H1 (cell line): ENCODE measurements at regions of chr6 and their contacts with region 1.

Region 1: DNA sequence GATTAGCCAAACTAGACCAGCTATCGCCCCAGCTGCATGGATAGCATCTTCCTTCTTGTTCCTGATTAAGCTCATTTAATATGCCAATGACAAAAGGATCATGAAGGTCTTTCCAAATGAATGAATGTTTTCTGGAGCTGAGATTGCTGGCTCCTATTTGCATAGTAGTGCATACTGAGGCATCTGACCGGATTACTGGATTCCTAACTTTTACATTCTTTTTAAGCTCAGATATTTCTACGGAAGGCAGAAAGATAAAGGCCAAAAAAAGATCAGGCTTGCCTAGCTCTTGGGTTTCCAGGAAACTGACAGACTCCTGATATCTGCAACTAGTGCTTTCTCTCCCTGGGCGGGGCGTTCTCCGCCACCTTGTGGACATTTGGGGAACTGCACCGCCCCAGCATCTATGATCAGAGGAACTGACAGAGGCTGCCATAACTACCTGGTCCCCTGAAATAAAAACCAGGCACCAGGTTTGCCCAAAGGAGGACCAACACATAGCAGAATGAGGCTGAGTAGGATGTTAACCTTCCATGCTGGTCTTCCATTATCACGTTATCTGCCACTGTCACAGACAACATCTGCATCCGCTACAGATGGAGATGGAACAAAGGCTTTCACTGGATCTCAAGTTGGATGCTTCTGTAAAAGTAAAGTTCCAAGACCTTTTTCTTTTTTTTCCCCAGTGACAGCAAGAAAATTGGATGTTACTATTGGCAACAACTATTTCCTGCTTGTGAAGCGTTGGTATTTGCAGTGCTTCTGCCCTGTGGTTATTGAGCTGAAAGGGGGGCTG is 33.2 kb downstream of the NT5E start:
- DNase-seq: peak; percentile 33 to 97
- H3K4me3 ChIP-seq: no peak overlapping the region
- H3K27ac ChIP-seq: no peak overlapping the region
- H3K4me1 ChIP-seq: no peaks in the 10 kb centered on the region
- H3K27me3 ChIP-seq: no peaks in the 10 kb centered on the region
- CTCF ChIP-seq: peak; percentile 86 to 96 (median 92)
- EP300 ChIP-seq: no peak
- POLR2A ChIP-seq: no peak
- RAD21 ChIP-seq: peak; percentile 88 to 93

Region 2: DNA sequence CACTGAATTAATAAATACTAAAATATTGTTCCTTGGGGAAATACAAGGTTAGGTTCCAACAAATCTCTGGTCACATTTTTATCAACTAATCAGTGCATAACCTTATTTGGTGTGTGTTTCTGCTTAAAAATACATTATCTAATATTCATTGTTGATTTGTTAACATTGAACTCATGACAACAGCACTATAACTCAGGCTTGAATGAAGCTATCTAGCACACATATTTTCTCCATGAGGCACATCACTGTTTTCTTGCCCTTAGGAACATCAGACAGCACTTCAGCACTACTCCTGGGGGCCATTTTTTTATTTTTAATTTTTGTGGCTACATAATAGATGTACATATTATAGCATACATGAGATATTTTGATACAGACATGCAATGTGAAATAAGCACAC is 310.4 kb before region 1 on chr6:
- CTCF ChIA-PET with region 1: no interaction called
- POLR2A ChIA-PET with region 1: no interaction called
- DNase-seq: no peak
- H3K4me3 ChIP-seq: no peak overlapping the region
- H3K27ac ChIP-seq: no peak overlapping the region
- H3K4me1 ChIP-seq: peaks cover 0 to 3% (median 0%) of the 10 kb centered on the region in 4 experiments; a peak in 1 of 7 replicates
- H3K27me3 ChIP-seq: no peaks in the 10 kb centered on the region
- CTCF ChIP-seq: no peak
- EP300 ChIP-seq: no peak
- POLR2A ChIP-seq: no peak
- RAD21 ChIP-seq: no peak

Region 3: DNA sequence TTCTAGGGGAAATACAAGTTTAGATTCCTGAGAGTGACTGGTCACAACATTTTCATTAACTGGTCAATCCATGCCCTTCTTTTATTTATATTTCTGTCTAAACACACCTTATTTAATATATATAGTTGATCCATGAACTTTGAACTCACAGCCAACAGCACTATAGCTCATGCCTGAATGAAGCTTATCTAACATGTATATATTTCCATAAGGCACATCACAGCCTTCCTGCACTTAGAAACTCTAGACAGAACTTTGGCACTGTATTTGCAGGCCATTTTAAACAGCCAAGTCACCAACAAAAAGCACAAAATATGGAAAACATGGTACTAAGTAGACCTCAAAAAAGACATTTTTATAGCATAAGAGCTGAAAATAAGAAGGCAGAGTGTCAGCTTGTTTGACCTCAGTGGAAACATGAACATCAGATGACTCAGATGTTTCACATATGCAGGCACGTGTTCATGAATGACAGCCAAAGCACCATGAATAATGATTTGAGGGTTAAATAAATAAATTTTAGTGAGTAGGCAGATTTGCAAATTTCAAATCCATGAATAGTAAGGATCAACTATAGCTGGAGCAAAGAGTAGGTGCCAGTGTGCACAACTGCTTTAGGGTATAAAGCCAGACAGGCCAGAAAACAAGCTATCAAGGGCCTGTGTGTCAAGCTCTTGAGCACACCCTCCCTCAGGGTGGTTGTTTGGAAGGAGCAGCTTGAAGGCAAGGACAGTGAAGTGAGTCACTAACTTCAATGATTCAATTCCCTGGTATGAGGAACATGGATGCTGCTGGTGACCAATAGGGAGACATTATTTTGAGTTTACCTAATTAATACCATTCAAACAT is 122.1 kb before region 1 on chr6:
- CTCF ChIA-PET with region 1: interaction called, 153 read pairs
- POLR2A ChIA-PET with region 1: no interaction called
- DNase-seq: no peak
- H3K4me3 ChIP-seq: no peak overlapping the region
- H3K27ac ChIP-seq: no peak overlapping the region
- H3K4me1 ChIP-seq: no peaks in the 10 kb centered on the region
- H3K27me3 ChIP-seq: no peaks in the 10 kb centered on the region
- CTCF ChIP-seq: no peak
- EP300 ChIP-seq: no peak
- POLR2A ChIP-seq: no peak
- RAD21 ChIP-seq: no peak

Region 4: GRCh38 chr6:85385636-85386315 is 97.3 kb before region 1 on chr6:
- CTCF ChIA-PET with region 1: interaction called, 19 read pairs
- POLR2A ChIA-PET with region 1: no interaction called
- DNase-seq: no peak
- H3K4me3 ChIP-seq: no peak overlapping the region
- H3K27ac ChIP-seq: no peak overlapping the region
- H3K4me1 ChIP-seq: no peaks in the 10 kb centered on the region
- H3K27me3 ChIP-seq: no peaks in the 10 kb centered on the region
- CTCF ChIP-seq: no peak
- EP300 ChIP-seq: no peak
- POLR2A ChIP-seq: no peak
- RAD21 ChIP-seq: no peak

Region 5: GRCh38 chr6:85449818-85450759 is 33.0 kb before region 1 on chr6 and contains the start of gene NT5E:
- CTCF ChIA-PET with region 1: interaction called, 33 read pairs
- POLR2A ChIA-PET with region 1: interaction called, 3 read pairs
- DNase-seq: peak in 1 of 2 experiments; percentile 89
- H3K4me3 ChIP-seq: peak within 1 kb of the TSS; percentile 65 to 80 (median 69)
- H3K27ac ChIP-seq: no peak within 1 kb of the TSS
- H3K4me1 ChIP-seq: no peaks in the 10 kb centered on the region; a peak in 1 of 7 replicates
- H3K27me3 ChIP-seq: peaks cover 10 to 49% (median 40%) of the 10 kb centered on the region in 4 experiments
- CTCF ChIP-seq: peak in 1 of 3 experiments; percentile 7; a peak in 1 of 4 replicates
- EP300 ChIP-seq: no peak
- POLR2A ChIP-seq: peak in 1 of 2 experiments; percentile 49; a peak in 1 of 3 replicates
- RAD21 ChIP-seq: no peak
- total RNA-seq, gene NT5E: 1.1 and 1.5 TPM in 2 replicates

Region 6: GRCh38 chr6:85472749-85473148 is 10.4 kb before region 1 on chr6:
- CTCF ChIA-PET with region 1: interaction called, 99 read pairs
- POLR2A ChIA-PET with region 1: no interaction called
- DNase-seq: no peak
- H3K4me3 ChIP-seq: no peak overlapping the region
- H3K27ac ChIP-seq: no peak overlapping the region
- H3K4me1 ChIP-seq: no peaks in the 10 kb centered on the region
- H3K27me3 ChIP-seq: no peaks in the 10 kb centered on the region
- CTCF ChIP-seq: no peak
- EP300 ChIP-seq: no peak
- POLR2A ChIP-seq: no peak
- RAD21 ChIP-seq: no peak

Region 7: DNA sequence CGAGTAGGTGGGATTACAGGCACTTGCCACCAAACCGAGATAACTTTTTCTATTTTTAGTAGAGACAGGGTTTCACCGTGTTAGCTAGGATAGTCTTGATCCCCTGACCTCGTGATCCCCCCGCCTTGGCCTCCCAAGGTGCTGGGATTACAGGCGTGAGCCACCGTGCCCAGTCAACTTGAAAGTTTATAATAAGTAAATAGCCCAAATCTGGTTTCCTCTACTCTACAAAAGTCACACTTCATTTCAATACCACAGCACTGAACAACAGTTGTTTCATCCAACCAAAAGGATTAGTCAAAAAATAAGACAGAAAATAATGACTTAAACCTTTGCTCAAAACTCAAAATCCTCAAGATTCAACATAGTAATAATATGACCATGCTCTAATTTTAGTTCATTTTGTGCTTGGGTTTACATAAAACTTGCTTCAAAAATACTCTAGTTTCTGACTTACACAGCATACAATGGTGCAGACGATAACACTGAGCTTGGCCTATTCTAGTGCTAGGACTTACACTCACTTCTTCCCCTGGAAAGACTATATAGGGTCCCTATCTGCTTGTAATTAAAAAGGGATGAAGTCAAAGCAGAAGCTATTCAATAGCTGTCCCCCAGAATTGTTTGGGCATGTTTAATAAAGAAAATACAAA is 23.5 kb after region 1 on chr6:
- CTCF ChIA-PET with region 1: interaction called, 11 read pairs
- POLR2A ChIA-PET with region 1: interaction called, 3 read pairs
- DNase-seq: no peak
- H3K4me3 ChIP-seq: no peak overlapping the region
- H3K27ac ChIP-seq: no peak overlapping the region
- H3K4me1 ChIP-seq: no peaks in the 10 kb centered on the region
- H3K27me3 ChIP-seq: peaks cover 0 to 1% (median 0%) of the 10 kb centered on the region in 4 experiments; a peak in 1 of 7 replicates
- CTCF ChIP-seq: no peak
- EP300 ChIP-seq: no peak
- POLR2A ChIP-seq: no peak
- RAD21 ChIP-seq: no peak

Region 8: GRCh38 chr6:85747665-85748064 is 264.6 kb after region 1 on chr6:
- CTCF ChIA-PET with region 1: no interaction called
- POLR2A ChIA-PET with region 1: no interaction called
- DNase-seq: no peak
- H3K4me3 ChIP-seq: no peak overlapping the region
- H3K27ac ChIP-seq: no peak overlapping the region
- H3K4me1 ChIP-seq: peaks cover 0 to 2% (median 0%) of the 10 kb centered on the region in 4 experiments; a peak in 1 of 7 replicates
- H3K27me3 ChIP-seq: no peaks in the 10 kb centered on the region
- CTCF ChIP-seq: no peak
- EP300 ChIP-seq: no peak
- POLR2A ChIP-seq: no peak
- RAD21 ChIP-seq: no peak

Region 9: DNA sequence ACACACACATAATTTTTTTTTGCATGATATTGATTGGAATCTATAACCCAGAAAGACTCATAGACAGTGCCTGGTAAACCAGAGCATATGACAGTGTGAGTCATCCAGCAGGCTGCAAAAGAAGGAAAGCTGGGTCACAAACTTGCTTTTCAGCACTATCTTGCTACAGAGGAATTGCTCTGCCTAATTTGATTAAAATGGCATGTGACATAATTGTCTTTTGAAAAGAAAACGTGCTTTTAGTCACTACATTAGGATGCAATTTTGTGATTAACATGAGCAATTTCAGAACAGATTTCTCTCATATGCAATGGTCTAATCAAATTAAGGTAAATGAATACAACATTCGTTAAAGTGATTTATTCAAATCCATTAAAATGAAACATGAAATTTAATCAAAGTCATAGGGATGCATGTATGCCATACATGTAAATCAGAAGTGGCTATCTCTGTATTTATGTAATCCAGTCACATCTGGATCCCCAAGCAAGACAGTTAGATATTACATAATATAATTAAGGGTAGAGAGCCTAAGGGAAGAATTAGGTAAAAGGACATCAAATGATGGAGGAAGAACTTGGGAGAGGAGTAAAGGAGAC is 1054.3 kb after region 1 on chr6:
- CTCF ChIA-PET with region 1: no interaction called
- POLR2A ChIA-PET with region 1: no interaction called
- DNase-seq: no peak
- H3K4me3 ChIP-seq: no peak overlapping the region
- H3K27ac ChIP-seq: no peak overlapping the region
- H3K4me1 ChIP-seq: no peaks in the 10 kb centered on the region
- H3K27me3 ChIP-seq: no peaks in the 10 kb centered on the region
- CTCF ChIP-seq: no peak
- EP300 ChIP-seq: no peak
- POLR2A ChIP-seq: no peak
- RAD21 ChIP-seq: no peak